PC-3 (cell line): ENCODE measurements at regions of chr9 and their contacts with region 1.

Region 1: GRCh38 chr9:684054-684890 is 157.2 kb upstream of the DMRT1 start:
- DNase-seq: peak; percentile 53
- ATAC-seq: peak; percentile 25
- H3K4me3 ChIP-seq: peak overlapping the region; percentile 63
- H3K27ac ChIP-seq: peak overlapping the region; percentile 93
- H3K4me1 ChIP-seq: peaks cover 57% of the 10 kb centered on the region
- H3K27me3 ChIP-seq: no peaks in the 10 kb centered on the region
- CTCF ChIP-seq: no peak

Region 2: GRCh38 chr9:738209-738915 is 54.1 kb after region 1 on chr9:
- CTCF ChIA-PET with region 1: no interaction called
- POLR2A ChIA-PET with region 1: no interaction called
- intact Hi-C with region 1: loop called (anchors 1 kb)
- DNase-seq: peak; percentile 94
- ATAC-seq: peak; percentile 90
- H3K4me3 ChIP-seq: peak overlapping the region; percentile 26
- H3K27ac ChIP-seq: peak overlapping the region; percentile 94
- H3K4me1 ChIP-seq: peaks cover 34% of the 10 kb centered on the region
- H3K27me3 ChIP-seq: no peaks in the 10 kb centered on the region
- CTCF ChIP-seq: no peak

Region 3: GRCh38 chr9:841371-842209 is 157.3 kb after region 1 on chr9 and contains the start of gene DMRT1:
- CTCF ChIA-PET with region 1: no interaction called
- POLR2A ChIA-PET with region 1: no interaction called
- intact Hi-C with region 1: no loop called
- DNase-seq: no peak
- ATAC-seq: no peak
- H3K4me3 ChIP-seq: peak within 1 kb of the TSS; percentile 49
- H3K27ac ChIP-seq: no peak within 1 kb of the TSS
- H3K4me1 ChIP-seq: peaks cover 3% of the 10 kb centered on the region; the same call in 1 of the 2 replicates
- H3K27me3 ChIP-seq: peaks cover 19% of the 10 kb centered on the region; the same call in 1 of the 2 replicates
- CTCF ChIP-seq: no peak
- total RNA-seq, gene DMRT1: 0.04 TPM in 1 of 2 replicates, not detected in the other